GM12878 (cell line): ENCODE measurements at regions of chr11 and their contacts with region 1.

Region 1: GRCh38 chr11:58592760-58593472 is 14.1 kb downstream of the ZFP91 start:
- DNase-seq: no peak
- ATAC-seq: peak; percentile 41
- H3K4me3 ChIP-seq: no peak overlapping the region
- H3K27ac ChIP-seq: no peak overlapping the region
- H3K4me1 ChIP-seq: peaks cover 5% of the 10 kb centered on the region
- H3K27me3 ChIP-seq: no peaks in the 10 kb centered on the region
- CTCF ChIP-seq: no peak
- EP300 ChIP-seq: no peak
- POLR2A ChIP-seq: no peak
- RAD21 ChIP-seq: no peak

Region 2: DNA sequence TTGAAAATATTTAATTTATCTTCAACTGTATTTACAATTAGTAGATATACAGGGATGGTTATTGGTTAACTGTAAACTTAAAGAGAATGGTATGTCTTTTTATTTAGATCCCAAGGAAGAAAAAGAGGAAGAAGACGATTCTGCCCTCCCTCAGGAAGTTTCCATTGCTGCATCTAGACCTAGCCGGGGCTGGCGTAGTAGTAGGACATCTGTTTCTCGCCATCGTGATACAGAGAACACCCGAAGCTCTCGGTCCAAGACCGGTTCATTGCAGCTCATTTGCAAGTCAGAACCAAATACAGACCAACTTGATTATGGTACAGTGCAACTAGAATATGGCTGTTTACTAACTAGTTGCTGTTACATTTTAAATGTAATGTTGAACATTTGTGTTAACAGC is 16.8 kb after region 1 on chr11:
- CTCF ChIA-PET with region 1: interaction called, 6 read pairs
- POLR2A ChIA-PET with region 1: interaction called, 4 read pairs
- RAD21 ChIA-PET with region 1: interaction called, 3 read pairs
- SMC1A ChIA-PET with region 1: interaction called, 15 read pairs
- in situ Hi-C with region 1: no loop called
- intact Hi-C with region 1: no loop called
- DNase-seq: no peak
- ATAC-seq: peak; percentile 40
- H3K4me3 ChIP-seq: no peak overlapping the region
- H3K27ac ChIP-seq: no peak overlapping the region
- H3K4me1 ChIP-seq: peaks cover 9% of the 10 kb centered on the region
- H3K27me3 ChIP-seq: no peaks in the 10 kb centered on the region
- CTCF ChIP-seq: no peak
- EP300 ChIP-seq: no peak
- POLR2A ChIP-seq: no peak
- RAD21 ChIP-seq: no peak